ENCODE measurements at regions of chr18 and their contacts with region 1.

Region 1: GRCh38 chr18:77054606-77055428 is 77.8 kb downstream of the MBP start:
- DNase-seq: peak; percentile 97
- H3K4me3 ChIP-seq: peak overlapping the region in 6 of 8 donors; percentile 13 to 61 (median 21)
- H3K27ac ChIP-seq: peak overlapping the region; percentile 88 to 98 (median 95)
- H3K4me1 ChIP-seq: peaks cover 59 to 96% (median 78%) of the 10 kb centered on the region in 6 donors
- H3K27me3 ChIP-seq: no peaks in the 10 kb centered on the region
- CTCF ChIP-seq: peak; percentile 62 to 89 (median 85)
- POLR2A ChIP-seq: peak in 1 of 3 donors; percentile 18

Region 2: DNA sequence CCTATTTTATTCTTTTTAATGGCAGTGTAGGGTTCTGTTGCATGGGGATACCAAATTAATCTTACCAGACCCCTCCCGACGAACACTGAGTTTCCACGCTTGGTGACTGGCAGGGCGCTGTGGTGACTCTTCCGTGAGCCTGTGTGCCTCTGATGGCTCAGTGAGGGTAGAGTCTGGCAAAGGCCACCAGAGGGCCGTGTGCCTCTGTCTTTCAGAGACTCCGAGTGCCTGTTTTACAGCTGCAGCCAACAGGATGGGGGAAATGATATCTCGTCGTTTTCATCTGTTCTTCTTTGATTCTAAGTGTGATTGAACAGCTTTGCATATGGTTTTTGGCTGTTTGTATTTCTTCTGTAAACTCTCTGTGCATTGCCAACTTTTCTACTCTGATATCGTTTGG is 132.7 kb before region 1 on chr18:
- intact Hi-C with region 1: no loop called
- DNase-seq: peak; percentile 87
- H3K4me3 ChIP-seq: no peak overlapping the region
- H3K27ac ChIP-seq: no peak overlapping the region
- H3K4me1 ChIP-seq: peaks cover 0 to 11% (median 0%) of the 10 kb centered on the region in 6 donors
- H3K27me3 ChIP-seq: no peaks in the 10 kb centered on the region
- CTCF ChIP-seq: peak; percentile 33 to 78 (median 67)
- POLR2A ChIP-seq: no peak

Region 3: DNA sequence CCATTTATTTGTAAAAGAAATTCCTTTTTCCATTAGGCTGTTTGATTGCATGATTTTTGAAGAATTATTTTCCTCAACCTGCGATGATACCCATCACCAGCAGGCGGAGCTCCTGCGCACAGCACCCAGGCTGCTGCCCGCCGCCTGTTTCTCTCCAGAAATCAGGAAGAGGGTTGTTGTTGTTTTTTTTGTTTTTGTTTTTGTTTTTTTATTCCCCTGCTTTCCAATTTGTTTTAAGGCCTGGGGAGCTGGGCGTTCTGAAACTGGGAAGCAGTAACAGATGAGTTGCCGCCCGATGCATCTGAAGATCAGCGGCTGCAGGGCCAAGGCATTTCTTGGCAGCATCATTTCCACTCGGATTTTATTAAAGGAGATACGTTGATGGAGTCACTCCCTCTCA is 54.3 kb before region 1 on chr18:
- intact Hi-C with region 1: loop called (anchors 5 kb)
- DNase-seq: peak; percentile 89
- H3K4me3 ChIP-seq: peak overlapping the region in 1 of 8 donors; percentile 23
- H3K27ac ChIP-seq: peak overlapping the region in 1 of 8 donors; percentile 24
- H3K4me1 ChIP-seq: peaks cover 8 to 33% (median 22%) of the 10 kb centered on the region in 6 donors
- H3K27me3 ChIP-seq: no peaks in the 10 kb centered on the region
- CTCF ChIP-seq: peak; percentile 65 to 97 (median 90)
- POLR2A ChIP-seq: no peak

Region 4: DNA sequence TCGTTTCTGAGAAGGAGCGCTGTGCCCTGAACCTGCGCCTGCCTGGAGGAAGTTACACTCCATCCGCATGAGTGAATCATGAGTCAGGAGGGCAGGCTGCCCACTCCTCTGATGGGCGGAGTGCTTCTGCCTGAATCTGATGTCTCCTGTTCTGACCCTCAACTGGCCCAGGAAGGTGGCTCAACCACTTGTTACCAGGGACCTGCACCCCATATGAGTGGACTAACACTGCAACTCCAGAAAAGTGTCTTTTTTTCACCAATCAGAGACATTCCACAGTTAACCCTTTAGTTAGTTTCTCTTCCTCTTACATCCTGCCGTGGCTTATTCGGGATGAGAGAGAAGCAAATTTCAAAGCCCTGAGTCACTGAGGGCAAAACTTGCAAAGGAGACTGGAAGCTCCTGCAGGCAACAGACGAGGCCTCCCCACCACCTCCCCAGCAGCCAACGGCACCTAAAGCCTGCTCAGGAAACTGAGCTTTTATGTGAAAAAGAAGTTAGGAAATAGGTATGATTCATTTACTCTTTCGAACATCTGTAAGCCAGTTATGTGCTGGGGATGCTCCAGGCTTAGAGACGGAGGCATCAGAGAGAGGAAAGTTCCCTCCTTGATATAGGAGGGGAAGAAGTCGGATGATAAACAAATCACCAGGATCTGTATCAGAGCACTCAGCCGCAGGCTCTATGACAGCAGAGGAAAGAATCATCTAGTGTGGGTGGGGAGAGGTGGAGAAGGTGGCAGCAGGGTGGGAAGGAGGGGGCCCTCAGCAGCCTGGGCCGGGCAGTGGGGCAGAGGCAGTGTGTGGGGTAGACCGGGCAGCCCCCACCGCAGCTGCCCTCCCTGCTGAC is 46.8 kb after region 1 on chr18:
- intact Hi-C with region 1: loop called (anchors 10 kb)
- DNase-seq: peak; percentile 91
- H3K4me3 ChIP-seq: peak overlapping the region in 1 of 8 donors; percentile 49
- H3K27ac ChIP-seq: peak overlapping the region; percentile 77 to 95 (median 88)
- H3K4me1 ChIP-seq: peaks cover 70 to 100% (median 99%) of the 10 kb centered on the region in 6 donors
- H3K27me3 ChIP-seq: peaks cover 0 to 34% (median 0%) of the 10 kb centered on the region in 7 donors
- CTCF ChIP-seq: no peak
- POLR2A ChIP-seq: no peak